ENCODE measurements at regions of chr9 and their contacts with region 1.

Region 1: DNA sequence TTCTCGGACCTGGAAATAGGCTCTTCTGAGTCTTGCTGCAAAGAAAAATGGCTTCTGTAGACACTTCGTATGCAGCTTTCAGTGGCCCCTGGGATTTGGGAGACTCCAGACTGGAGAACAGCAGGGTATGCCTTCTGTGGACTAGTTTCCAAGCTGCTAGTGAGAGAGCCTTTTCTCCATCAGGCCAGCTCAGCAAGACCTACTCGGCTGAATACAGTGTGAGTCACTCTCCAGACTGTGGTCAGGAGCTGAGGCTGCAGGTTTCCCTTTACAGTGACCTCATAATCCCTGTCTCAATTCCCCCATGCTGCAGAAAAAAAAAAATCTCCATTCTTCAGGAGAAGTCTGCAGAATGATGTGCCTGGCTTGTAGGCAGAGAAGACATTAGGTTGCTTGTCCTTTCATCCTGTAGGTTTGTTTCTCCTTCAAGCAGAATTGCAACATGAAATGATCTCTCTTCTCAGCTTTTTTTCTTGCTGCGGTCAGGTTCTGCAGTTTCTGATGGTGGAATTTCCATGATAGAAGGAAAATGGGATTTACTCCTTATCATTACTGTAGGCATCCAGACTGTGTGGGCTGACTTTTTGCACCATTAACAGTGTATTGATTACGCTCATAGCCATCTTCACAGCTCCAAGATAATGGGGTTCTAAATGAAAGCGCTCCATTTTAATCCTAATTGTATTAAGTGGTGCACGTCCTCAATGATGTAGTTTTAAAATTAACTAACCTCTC is 78.3 kb upstream of the TNFSF8 start:
- DNase-seq: peak; percentile 65
- H3K4me3 ChIP-seq: no peak overlapping the region
- CTCF ChIP-seq: no peak

Region 2: DNA sequence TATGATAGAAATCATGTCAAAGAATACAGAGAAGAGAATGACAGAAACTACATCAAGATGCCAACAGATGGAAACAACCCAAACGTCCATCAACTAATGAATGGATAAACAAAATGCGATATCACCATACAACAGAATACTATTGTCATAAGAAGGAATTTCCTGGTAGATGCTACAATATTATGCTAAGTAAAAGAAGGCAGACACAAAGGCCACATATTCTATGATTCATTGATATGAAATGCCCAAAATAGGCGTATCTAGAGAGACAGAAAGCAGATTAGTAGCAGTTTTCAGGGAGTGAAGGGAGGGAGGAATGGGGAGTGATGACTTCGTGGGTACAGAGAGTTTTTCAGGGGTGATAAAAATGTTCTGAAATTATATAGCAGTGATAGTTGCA is 562.7 kb before region 1 on chr9:
- CTCF ChIA-PET with region 1: no interaction called
- POLR2A ChIA-PET with region 1: no interaction called
- DNase-seq: no peak
- H3K4me3 ChIP-seq: no peak overlapping the region
- CTCF ChIP-seq: no peak

Region 3: GRCh38 chr9:114662081-114662989 is 346.4 kb before region 1 on chr9:
- CTCF ChIA-PET with region 1: interaction called, 29 read pairs
- POLR2A ChIA-PET with region 1: no interaction called
- DNase-seq: no peak
- H3K4me3 ChIP-seq: no peak overlapping the region
- CTCF ChIP-seq: peak; percentile 76